H1 (cell line): ENCODE measurements at regions of chr3 and their contacts with region 1.

Region 1: GRCh38 chr3:59052803-59053411 is 3.1 kb upstream of the CFAP20DC start:
- DNase-seq: no peak
- H3K4me3 ChIP-seq: no peak overlapping the region
- H3K27ac ChIP-seq: no peak overlapping the region
- H3K4me1 ChIP-seq: peaks cover 0 to 6% (median 1%) of the 10 kb centered on the region in 4 experiments; a peak in 2 of 7 replicates
- H3K27me3 ChIP-seq: peaks cover 0 to 3% (median 0%) of the 10 kb centered on the region in 4 experiments; a peak in 2 of 7 replicates
- CTCF ChIP-seq: peak; percentile 19 to 64 (median 57)
- EP300 ChIP-seq: no peak
- POLR2A ChIP-seq: no peak
- RAD21 ChIP-seq: peak; percentile 73 to 74

Region 2: DNA sequence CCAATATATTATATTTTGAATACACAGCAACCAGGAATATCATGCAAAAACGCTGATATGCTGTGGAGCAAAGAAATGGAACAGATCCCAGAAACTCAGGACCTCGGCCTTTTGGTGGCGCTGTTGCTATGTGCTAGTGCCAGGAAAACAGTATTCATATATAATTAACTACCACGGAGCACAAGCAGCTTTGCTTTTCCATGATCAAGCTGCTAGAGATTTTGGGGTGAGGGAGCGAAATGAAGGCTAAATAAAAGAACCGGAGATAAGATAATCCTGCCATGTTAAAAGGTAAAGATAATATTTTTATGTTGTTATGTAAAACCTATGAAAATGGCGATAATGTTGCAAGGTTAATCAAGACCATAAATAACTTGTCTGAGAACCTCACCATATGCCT is 228.6 kb before region 1 on chr3:
- CTCF ChIA-PET with region 1: interaction called, 18 read pairs
- POLR2A ChIA-PET with region 1: no interaction called
- DNase-seq: peak; percentile 27 to 79
- H3K4me3 ChIP-seq: no peak overlapping the region
- H3K27ac ChIP-seq: no peak overlapping the region
- H3K4me1 ChIP-seq: no peaks in the 10 kb centered on the region
- H3K27me3 ChIP-seq: no peaks in the 10 kb centered on the region
- CTCF ChIP-seq: peak; percentile 35 to 84 (median 80)
- EP300 ChIP-seq: no peak
- POLR2A ChIP-seq: no peak
- RAD21 ChIP-seq: peak; percentile 90 to 92

Region 3: GRCh38 chr3:58994746-58995330 is 58.1 kb before region 1 on chr3:
- CTCF ChIA-PET with region 1: interaction called, 19 read pairs
- POLR2A ChIA-PET with region 1: no interaction called
- DNase-seq: peak in 1 of 2 experiments; percentile 5
- H3K4me3 ChIP-seq: no peak overlapping the region
- H3K27ac ChIP-seq: no peak overlapping the region
- H3K4me1 ChIP-seq: no peaks in the 10 kb centered on the region
- H3K27me3 ChIP-seq: peaks cover 0 to 1% (median 0%) of the 10 kb centered on the region in 4 experiments; a peak in 1 of 7 replicates
- CTCF ChIP-seq: peak in 2 of 3 experiments; percentile 63 to 82; a peak in 3 of 4 replicates
- EP300 ChIP-seq: no peak
- POLR2A ChIP-seq: no peak
- RAD21 ChIP-seq: peak; percentile 84 to 89

Region 4: GRCh38 chr3:59064276-59064675 is 11.4 kb after region 1 on chr3:
- CTCF ChIA-PET with region 1: interaction called, 29 read pairs
- POLR2A ChIA-PET with region 1: no interaction called
- DNase-seq: peak in 1 of 2 experiments; percentile 50
- H3K4me3 ChIP-seq: no peak overlapping the region
- H3K27ac ChIP-seq: no peak overlapping the region
- H3K4me1 ChIP-seq: peaks cover 0 to 2% (median 0%) of the 10 kb centered on the region in 4 experiments; a peak in 2 of 7 replicates
- H3K27me3 ChIP-seq: no peaks in the 10 kb centered on the region
- CTCF ChIP-seq: peak; percentile 34 to 51 (median 43)
- EP300 ChIP-seq: no peak
- POLR2A ChIP-seq: no peak
- RAD21 ChIP-seq: peak; percentile 44 to 58; a peak in 3 of 4 replicates

Region 5: DNA sequence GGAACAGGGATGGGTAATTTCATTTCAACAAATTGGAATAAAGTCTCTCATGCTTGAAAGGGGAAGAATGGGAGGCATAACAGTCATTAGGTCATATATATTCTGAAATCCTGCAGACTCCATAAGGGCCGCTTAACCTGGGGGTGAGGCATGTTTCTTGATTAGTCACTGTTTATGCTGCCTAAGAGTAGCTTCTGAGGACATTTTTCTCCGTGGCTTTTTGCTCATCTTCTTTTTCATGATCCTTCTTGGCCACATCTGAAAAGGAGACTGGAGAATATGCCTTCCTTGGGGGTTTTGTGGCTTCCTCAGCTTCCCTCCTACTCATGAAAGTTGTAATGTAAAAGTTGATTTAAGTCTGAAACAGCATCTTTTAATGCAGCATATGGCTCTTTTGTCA is 16.9 kb after region 1 on chr3:
- CTCF ChIA-PET with region 1: interaction called, 29 read pairs
- POLR2A ChIA-PET with region 1: no interaction called
- DNase-seq: no peak
- H3K4me3 ChIP-seq: no peak overlapping the region
- H3K27ac ChIP-seq: no peak overlapping the region
- H3K4me1 ChIP-seq: no peaks in the 10 kb centered on the region; a peak in 1 of 7 replicates
- H3K27me3 ChIP-seq: no peaks in the 10 kb centered on the region
- CTCF ChIP-seq: no peak
- EP300 ChIP-seq: no peak
- POLR2A ChIP-seq: no peak
- RAD21 ChIP-seq: no peak